ENCODE measurements at regions of chr7 and their contacts with region 1.

Region 1: GRCh38 chr7:33764752-33765451 is 140.4 kb upstream of the BMPER start:
- DNase-seq: peak in 3 of 7 donors; percentile 23 to 43 (median 26)
- H3K4me3 ChIP-seq: no peak overlapping the region
- H3K27ac ChIP-seq: peak overlapping the region in 1 of 5 donors; percentile 2
- H3K4me1 ChIP-seq: peaks cover 0 to 12% of the 10 kb centered on the region in 2 donors
- H3K27me3 ChIP-seq: no peaks in the 10 kb centered on the region
- CTCF ChIP-seq: no peak
- POLR2A ChIP-seq: no peak

Region 2: DNA sequence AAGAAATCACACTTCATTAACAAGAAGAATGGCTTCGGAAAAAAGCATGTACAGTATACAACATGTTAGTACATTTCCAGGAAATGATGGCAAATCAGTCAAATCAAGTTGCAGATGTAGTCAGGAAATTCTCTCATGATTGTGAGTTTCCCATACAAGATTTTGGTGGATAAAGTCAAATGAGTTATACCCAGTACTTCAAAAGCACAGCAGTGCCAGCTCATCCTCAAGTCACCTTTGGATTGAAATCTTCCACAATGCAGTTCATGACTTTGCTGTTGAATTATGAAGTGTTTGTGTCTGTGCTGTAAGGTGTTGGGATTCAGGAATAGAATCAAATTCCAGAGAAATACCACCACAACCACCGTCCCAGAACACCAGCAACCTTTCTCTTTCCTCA is 160.8 kb before region 1 on chr7:
- intact Hi-C with region 1: no loop called
- DNase-seq: no peak
- H3K4me3 ChIP-seq: no peak overlapping the region
- H3K27ac ChIP-seq: no peak overlapping the region
- H3K4me1 ChIP-seq: no peaks in the 10 kb centered on the region
- H3K27me3 ChIP-seq: no peaks in the 10 kb centered on the region
- CTCF ChIP-seq: no peak
- POLR2A ChIP-seq: no peak

Region 3: DNA sequence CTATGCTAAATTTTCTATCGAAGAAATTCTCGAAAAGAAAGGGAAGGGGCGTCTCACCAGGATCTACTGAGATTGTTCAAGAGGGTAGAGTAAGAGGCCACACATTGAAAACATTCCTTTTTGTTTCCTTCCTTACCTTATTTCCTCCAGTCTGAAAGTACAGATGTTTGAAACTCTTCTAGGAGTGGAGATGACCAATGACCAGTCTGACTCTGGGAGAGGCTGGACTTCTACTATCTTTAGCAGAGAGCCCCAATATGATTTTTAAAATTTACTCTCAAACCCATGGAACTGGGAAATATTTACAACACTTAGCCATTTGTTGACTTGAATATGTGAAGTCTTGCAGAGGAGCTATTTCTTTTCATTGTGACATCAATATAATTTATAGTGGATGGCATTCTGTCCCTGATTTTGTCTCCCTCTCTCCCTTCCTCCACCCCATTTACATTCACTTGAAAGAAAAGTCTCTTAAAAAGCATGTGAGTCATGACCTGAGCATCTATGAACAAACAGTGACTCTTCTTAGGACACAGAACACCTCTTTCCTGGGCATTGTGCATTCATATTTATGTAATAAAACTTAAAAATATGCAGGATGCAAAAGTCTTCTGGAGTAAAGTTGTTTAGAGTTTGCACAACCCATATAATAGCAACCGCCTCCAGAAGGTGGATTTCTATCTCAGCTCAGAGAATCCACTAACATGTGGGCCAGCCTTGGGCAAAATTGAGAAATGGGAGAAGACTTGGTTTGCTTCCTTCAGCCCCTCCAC is 109.3 kb after region 1 on chr7:
- intact Hi-C with region 1: no loop called
- DNase-seq: no peak
- H3K4me3 ChIP-seq: no peak overlapping the region
- H3K27ac ChIP-seq: no peak overlapping the region
- H3K4me1 ChIP-seq: peaks cover 0 to 6% of the 10 kb centered on the region in 2 donors
- H3K27me3 ChIP-seq: no peaks in the 10 kb centered on the region
- CTCF ChIP-seq: no peak
- POLR2A ChIP-seq: no peak

Region 4: DNA sequence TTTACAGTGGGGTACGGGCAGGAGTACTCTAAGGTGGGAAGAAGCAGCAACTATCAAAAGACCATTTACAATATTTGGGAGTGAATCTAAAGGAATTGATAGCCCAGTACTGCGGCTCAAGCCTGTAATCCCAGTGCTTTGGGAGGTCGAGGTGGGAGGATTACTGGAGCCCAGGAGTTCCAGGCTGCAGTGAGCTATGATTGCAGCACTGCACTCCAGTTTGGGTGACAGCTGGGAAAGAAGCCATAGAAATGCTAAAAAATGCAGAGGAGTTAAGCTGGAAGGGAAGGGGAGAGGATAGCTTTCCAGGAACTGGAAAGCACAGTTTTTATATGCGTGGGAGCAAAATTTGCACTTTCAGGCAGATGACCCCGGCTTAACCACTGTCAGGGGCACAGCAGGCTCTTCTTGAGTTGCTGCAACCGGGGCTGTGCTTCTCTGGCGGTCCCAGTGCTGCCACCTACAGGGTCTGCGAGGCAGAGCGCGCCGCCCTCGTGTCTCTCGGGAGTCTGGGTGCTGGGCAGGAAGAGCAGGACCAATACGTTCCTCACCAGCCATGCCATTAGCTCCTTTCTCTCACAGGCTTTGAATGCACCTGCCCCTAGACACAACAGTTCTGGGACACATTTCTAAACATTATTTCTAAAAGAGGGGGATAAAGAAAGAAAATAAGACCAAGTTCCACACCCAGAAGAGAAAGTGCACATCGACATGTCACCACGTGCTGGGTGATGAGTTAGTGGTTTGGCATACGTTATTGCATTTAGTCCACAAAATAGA is 130.3 kb after region 1 on chr7:
- intact Hi-C with region 1: loop called in 1 of 2 experiments (anchors 10 kb)
- DNase-seq: peak; percentile 80 to 94 (median 89)
- H3K4me3 ChIP-seq: no peak overlapping the region
- H3K27ac ChIP-seq: no peak overlapping the region
- H3K4me1 ChIP-seq: peaks cover 0 to 9% of the 10 kb centered on the region in 2 donors
- H3K27me3 ChIP-seq: no peaks in the 10 kb centered on the region
- CTCF ChIP-seq: peak; percentile 73 to 95 (median 86)
- POLR2A ChIP-seq: no peak

Region 5: DNA sequence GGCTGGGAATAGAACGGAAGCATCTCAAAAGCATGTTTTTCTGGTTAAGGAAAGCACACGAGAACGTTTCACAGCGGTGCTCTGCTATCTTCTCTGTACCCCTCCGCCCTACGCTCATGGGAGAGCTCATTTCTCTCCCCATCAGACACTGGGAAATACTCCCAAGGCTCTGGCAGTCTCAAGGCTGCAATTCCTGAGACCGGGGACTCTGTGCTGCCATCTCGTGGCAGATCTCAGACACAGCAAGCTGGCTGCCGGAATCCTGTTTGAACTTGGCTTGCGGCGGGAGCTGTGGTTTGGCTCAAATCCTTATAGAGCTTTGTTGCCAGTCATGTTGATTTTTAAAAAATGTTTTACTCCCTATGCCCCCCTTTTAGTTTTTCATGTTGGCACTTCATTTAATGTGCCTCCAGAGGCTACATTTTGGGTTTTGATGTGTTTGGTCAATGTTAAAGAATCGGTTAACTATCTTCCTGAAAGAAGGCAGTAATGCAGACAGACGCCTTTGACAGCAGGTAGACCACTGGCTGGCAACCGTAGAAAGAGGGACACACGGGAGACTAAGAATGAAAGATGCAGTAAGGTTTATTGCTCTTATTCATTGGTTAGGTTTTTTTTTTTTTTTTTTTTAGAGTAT is 168.0 kb after region 1 on chr7:
- intact Hi-C with region 1: loop called in 1 of 2 experiments (anchors 5 kb)
- DNase-seq: peak; percentile 78 to 95 (median 84)
- H3K4me3 ChIP-seq: peak overlapping the region in 1 of 4 donors; percentile 45
- H3K27ac ChIP-seq: no peak overlapping the region
- H3K4me1 ChIP-seq: peaks cover 0 to 13% of the 10 kb centered on the region in 2 donors
- H3K27me3 ChIP-seq: no peaks in the 10 kb centered on the region
- CTCF ChIP-seq: peak; percentile 82 to 97 (median 92)
- POLR2A ChIP-seq: no peak

Measured in adrenal gland (tissue), 19 donors.